WTC11 (cell line): ENCODE measurements at regions of chr19 and their contacts with region 1.

Region 1: GRCh38 chr19:58519355-58520256 is at the start of gene ZBTB45:
- DNase-seq: peak; percentile 92
- ATAC-seq: peak; percentile 75
- H3K4me3 Mint-ChIP-seq: peak within 1 kb of the TSS; percentile 97
- H3K27ac Mint-ChIP-seq: peak within 1 kb of the TSS; percentile 99
- H3K4me1 Mint-ChIP-seq: peaks cover 48% of the 10 kb centered on the region
- H3K27me3 Mint-ChIP-seq: no peaks in the 10 kb centered on the region
- CTCF ChIP-seq: peak; percentile 75
- total RNA-seq, gene ZBTB45: 17.0 to 19.7 TPM (median 18.0 TPM) in 3 replicates

Region 2: GRCh38 chr19:58362272-58362994 is 157.2 kb before region 1 on chr19 and contains the start of gene ZNF497:
- CTCF ChIA-PET with region 1: interaction called, 14 read pairs
- POLR2A ChIA-PET with region 1: interaction called, 9 read pairs
- DNase-seq: peak; percentile 98
- ATAC-seq: peak; percentile 93
- H3K4me3 Mint-ChIP-seq: peak within 1 kb of the TSS; percentile 94
- H3K27ac Mint-ChIP-seq: peak within 1 kb of the TSS; percentile 96
- H3K4me1 Mint-ChIP-seq: peaks cover 6% of the 10 kb centered on the region; the same call in 1 of the 2 replicates
- H3K27me3 Mint-ChIP-seq: no peaks in the 10 kb centered on the region
- CTCF ChIP-seq: no peak
- total RNA-seq, gene ZNF497: 1.7 to 2.1 TPM (median 2.0 TPM) in 3 replicates

Region 3: GRCh38 chr19:58538257-58539168 is 18.9 kb after region 1 on chr19:
- CTCF ChIA-PET with region 1: interaction called, 60 read pairs
- POLR2A ChIA-PET with region 1: interaction called, 25 read pairs
- DNase-seq: peak; percentile 93
- ATAC-seq: peak; percentile 98
- H3K4me3 Mint-ChIP-seq: peak overlapping the region; percentile 73
- H3K27ac Mint-ChIP-seq: peak overlapping the region; percentile 100
- H3K4me1 Mint-ChIP-seq: peaks cover 9% of the 10 kb centered on the region
- H3K27me3 Mint-ChIP-seq: peaks cover 51% of the 10 kb centered on the region
- CTCF ChIP-seq: no peak

Region 4: DNA sequence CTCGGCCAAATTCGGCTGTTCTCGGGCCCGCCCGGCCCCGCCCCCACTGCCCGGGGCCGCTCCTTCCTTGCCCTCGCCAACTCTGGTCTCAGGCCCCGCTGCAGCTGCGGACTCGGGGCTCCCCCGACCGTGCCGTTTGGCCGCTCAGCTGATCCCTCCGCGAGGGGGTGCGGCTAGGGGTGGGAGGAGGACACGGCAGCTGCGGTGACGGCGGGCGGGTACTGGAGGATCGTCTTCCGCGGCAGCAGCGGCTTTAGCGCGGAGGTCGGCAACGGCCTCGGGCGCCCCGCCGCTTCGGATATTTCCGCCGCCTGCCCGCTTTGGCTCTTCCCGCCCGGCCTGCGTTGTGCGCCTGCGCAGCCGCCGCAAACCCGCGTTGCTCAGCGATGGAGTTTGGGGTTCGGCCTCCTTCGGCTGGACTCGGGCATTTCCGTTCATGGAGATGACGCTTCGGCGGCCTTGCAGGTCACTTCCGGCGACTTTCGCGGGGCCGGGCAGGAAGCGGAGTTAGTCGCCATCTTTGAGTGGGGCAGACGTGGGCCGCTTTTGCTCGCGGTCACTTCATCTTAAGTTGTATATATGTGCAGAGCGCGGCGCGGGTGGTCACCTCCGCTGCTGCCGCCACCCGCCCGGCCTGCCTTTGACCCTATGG is 39.1 kb after region 1 on chr19:
- CTCF ChIA-PET with region 1: interaction called, 38 read pairs
- POLR2A ChIA-PET with region 1: interaction called, 34 read pairs
- DNase-seq: peak; percentile 100
- ATAC-seq: peak; percentile 59
- H3K4me3 Mint-ChIP-seq: peak overlapping the region; percentile 97
- H3K27ac Mint-ChIP-seq: peak overlapping the region; percentile 100
- H3K4me1 Mint-ChIP-seq: peaks cover 41% of the 10 kb centered on the region
- H3K27me3 Mint-ChIP-seq: peaks cover 43% of the 10 kb centered on the region
- CTCF ChIP-seq: no peak

Region 5: DNA sequence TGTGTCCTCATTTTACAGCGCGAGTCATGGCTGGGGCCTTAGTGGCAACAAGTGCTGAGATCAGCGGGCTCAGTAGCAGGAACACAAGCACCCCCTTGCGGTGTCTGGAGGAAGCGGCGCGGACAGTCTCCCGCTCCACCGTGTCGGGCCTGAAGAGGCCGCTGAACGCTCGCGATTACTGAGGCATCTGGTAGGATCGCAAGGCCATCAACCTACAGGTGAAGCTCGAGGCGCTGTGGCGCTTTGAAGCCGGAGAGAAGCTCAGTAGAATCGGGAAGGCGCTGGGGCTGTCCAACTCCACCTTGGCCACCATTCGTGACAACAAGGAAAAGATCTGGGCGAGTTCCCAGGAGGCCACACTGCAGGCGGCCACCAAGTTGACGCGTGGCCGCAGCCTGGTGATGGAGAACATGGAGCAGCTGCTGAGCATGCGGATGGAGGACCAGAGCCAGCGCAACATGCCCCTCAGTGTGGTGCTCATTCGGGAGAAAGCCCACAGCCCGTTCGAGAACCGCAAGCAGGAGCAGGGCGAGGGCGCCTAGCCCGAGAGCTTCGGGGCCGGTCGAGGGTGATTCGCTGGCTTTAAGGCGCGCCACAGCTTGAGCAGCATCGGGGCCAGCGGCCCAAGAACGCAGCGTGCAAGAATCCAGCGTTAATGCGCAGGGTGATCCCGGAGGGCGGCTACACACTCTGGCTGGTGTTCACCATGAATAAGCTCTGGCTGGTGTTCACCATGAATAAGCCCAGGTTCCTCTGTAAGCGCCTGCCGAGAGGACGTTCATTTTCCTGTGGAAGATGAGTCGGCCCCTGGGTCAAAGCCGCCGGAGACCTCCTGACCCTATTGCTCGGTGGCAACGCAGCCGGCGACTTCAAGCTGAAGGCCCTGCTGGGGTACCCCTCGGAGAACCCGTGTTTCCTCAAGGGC is 61.9 kb after region 1 on chr19:
- CTCF ChIA-PET with region 1: interaction called, 33 read pairs
- POLR2A ChIA-PET with region 1: interaction called, 9 read pairs
- DNase-seq: peak; percentile 97
- ATAC-seq: peak; percentile 97
- H3K4me3 Mint-ChIP-seq: no peak overlapping the region
- H3K27ac Mint-ChIP-seq: peak overlapping the region; percentile 91
- H3K4me1 Mint-ChIP-seq: peaks cover 7% of the 10 kb centered on the region
- H3K27me3 Mint-ChIP-seq: no peaks in the 10 kb centered on the region
- CTCF ChIP-seq: peak; percentile 90